Mammary epithelial cell (primary cell): ENCODE measurements at regions of chr6 and their contacts with region 1.

Region 1: DNA sequence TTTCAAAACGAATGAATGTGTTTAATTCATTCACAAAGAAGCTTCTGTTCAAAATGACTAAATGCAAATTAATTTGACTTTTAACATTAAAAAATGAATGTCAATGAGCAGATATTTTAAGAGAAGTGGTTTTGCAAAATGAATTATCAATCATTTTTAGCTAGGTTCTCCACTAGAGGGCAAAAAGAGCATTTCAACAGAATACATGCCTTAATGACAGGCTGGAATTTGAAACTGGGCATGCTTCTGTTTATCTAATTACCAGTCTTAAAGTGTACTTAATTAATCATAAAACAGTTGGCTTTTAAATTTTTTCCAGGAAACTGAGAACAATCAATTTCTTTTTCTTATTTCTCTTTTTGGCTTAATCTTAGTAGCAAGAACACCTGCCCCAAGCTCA is 63.8 kb upstream of the TINAG start:
- DNase-seq: peak; percentile 10
- H3K4me3 ChIP-seq: no peak overlapping the region
- H3K27ac ChIP-seq: no peak overlapping the region
- H3K4me1 ChIP-seq: no peaks in the 10 kb centered on the region
- H3K27me3 ChIP-seq: no peaks in the 10 kb centered on the region
- CTCF ChIP-seq: peak; percentile 63 to 67

Region 2: GRCh38 chr6:53250176-53251032 is 994.0 kb before region 1 on chr6:
- CTCF ChIA-PET with region 1: interaction called, 17 read pairs
- dilution Hi-C with region 1: no loop called
- in situ Hi-C with region 1: no loop called
- intact Hi-C with region 1: no loop called
- DNase-seq: peak; percentile 66
- H3K4me3 ChIP-seq: no peak overlapping the region
- H3K27ac ChIP-seq: no peak overlapping the region
- H3K4me1 ChIP-seq: peaks cover 12% of the 10 kb centered on the region
- H3K27me3 ChIP-seq: no peaks in the 10 kb centered on the region
- CTCF ChIP-seq: no peak

Region 3: GRCh38 chr6:54361188-54361587 is 116.8 kb after region 1 on chr6:
- CTCF ChIA-PET with region 1: no interaction called
- dilution Hi-C with region 1: no loop called
- in situ Hi-C with region 1: no loop called
- intact Hi-C with region 1: loop called (anchors 5 kb)
- DNase-seq: peak; percentile 38
- H3K4me3 ChIP-seq: no peak overlapping the region
- H3K27ac ChIP-seq: no peak overlapping the region
- H3K4me1 ChIP-seq: peaks cover 13% of the 10 kb centered on the region
- H3K27me3 ChIP-seq: no peaks in the 10 kb centered on the region
- CTCF ChIP-seq: no peak